Transverse colon (tissue), 4 donors: ENCODE measurements at regions of chr6 and their contacts with region 1.

Region 1: GRCh38 chr6:166627033-166627874 is at the start of gene RPS6KA2:
- DNase-seq: peak; percentile 100
- H3K4me3 ChIP-seq: peak within 1 kb of the TSS; percentile 64 to 85 (median 70)
- H3K27ac ChIP-seq: peak within 1 kb of the TSS; percentile 94 to 98 (median 96)
- H3K4me1 ChIP-seq: peaks cover 6 to 23% (median 13%) of the 10 kb centered on the region in 4 donors
- H3K27me3 ChIP-seq: peaks cover 9% of the 10 kb centered on the region
- CTCF ChIP-seq: no peak
- EP300 ChIP-seq: no peak
- POLR2A ChIP-seq: peak; percentile 80
- total RNA-seq, gene RPS6KA2: 9.6 to 41.1 (median 15.4) TPM

Region 2: GRCh38 chr6:166556871-166557322 is 70.4 kb before region 1 on chr6:
- in situ Hi-C with region 1: no loop called
- intact Hi-C with region 1: loop called (anchors 5 kb)
- DNase-seq: peak; percentile 75
- H3K4me3 ChIP-seq: no peak overlapping the region
- H3K27ac ChIP-seq: peak overlapping the region; percentile 44 to 68 (median 63)
- H3K4me1 ChIP-seq: peaks cover 0 to 21% (median 9%) of the 10 kb centered on the region in 4 donors
- H3K27me3 ChIP-seq: no peaks in the 10 kb centered on the region
- CTCF ChIP-seq: no peak
- EP300 ChIP-seq: no peak
- POLR2A ChIP-seq: no peak

Region 3: GRCh38 chr6:167766986-167767714 is 1139.9 kb after region 1 on chr6:
- in situ Hi-C with region 1: no loop called
- intact Hi-C with region 1: no loop called
- DNase-seq: no peak
- H3K4me3 ChIP-seq: no peak overlapping the region
- H3K27ac ChIP-seq: no peak overlapping the region
- H3K4me1 ChIP-seq: no peaks in the 10 kb centered on the region
- H3K27me3 ChIP-seq: no peaks in the 10 kb centered on the region
- CTCF ChIP-seq: no peak
- EP300 ChIP-seq: no peak
- POLR2A ChIP-seq: no peak

Region 4: DNA sequence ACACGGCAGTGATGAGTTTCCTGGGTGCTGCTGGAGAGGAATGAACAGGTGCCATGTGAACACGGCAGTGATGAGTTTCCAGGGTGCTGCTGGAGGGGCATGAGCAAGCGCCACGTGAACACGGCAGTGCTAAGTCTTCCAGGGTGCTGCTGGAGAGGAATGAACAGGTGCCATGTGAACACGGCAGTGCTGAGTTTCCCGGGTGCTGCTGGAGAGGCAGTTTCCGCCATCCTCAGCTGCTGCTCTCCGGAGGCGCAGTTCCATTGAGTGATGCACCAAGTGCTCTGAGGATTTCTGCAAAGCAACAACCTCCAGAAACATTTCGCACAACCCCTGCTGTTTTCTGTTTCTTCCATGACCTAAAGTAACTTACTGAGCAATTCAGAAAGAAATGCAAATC is 1969.1 kb after region 1 on chr6:
- in situ Hi-C with region 1: no loop called
- intact Hi-C with region 1: no loop called
- DNase-seq: no peak
- H3K4me3 ChIP-seq: no peak overlapping the region
- H3K27ac ChIP-seq: no peak overlapping the region
- H3K4me1 ChIP-seq: peaks cover 0 to 3% (median 1%) of the 10 kb centered on the region in 4 donors
- H3K27me3 ChIP-seq: no peaks in the 10 kb centered on the region
- CTCF ChIP-seq: no peak
- EP300 ChIP-seq: no peak
- POLR2A ChIP-seq: no peak